ENCODE measurements at regions of chr9 and their contacts with region 1.

Region 1: GRCh38 chr9:11269036-11269435 is 656.2 kb upstream of the PTPRD start:
- DNase-seq: no peak
- ATAC-seq: no peak
- H3K4me3 ChIP-seq: no peak overlapping the region
- H3K4me3 Mint-ChIP-seq: no peak overlapping the region
- H3K27ac ChIP-seq: no peak overlapping the region
- H3K27ac Mint-ChIP-seq: no peak overlapping the region
- H3K4me1 ChIP-seq: no peaks in the 10 kb centered on the region
- H3K4me1 Mint-ChIP-seq: no peaks in the 10 kb centered on the region
- H3K27me3 ChIP-seq: no peaks in the 10 kb centered on the region
- H3K27me3 Mint-ChIP-seq: no peaks in the 10 kb centered on the region
- CTCF ChIP-seq: no peak

Region 2: DNA sequence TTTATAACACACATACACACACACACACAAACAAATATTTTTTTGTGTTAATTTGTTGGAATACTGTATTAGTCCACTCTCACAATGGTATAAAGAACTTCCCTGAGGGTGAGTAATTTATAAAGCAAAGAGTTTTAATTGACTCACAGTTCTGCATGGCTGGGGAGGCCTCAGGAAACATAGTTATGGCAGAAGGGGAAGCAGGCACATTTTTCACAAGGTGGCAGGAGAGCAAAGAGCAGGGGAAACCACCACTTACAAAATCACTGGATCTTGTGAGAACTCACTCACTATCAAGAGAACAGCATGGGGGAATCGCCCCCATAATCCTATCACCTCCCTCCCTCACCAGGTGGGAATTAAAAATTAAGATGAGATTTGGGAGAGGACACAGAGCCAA is 450.8 kb before region 1 on chr9:
- intact Hi-C with region 1: no loop called
- DNase-seq: no peak
- ATAC-seq: no peak
- H3K4me3 ChIP-seq: no peak overlapping the region
- H3K4me3 Mint-ChIP-seq: no peak overlapping the region
- H3K27ac ChIP-seq: no peak overlapping the region
- H3K27ac Mint-ChIP-seq: no peak overlapping the region
- H3K4me1 ChIP-seq: no peaks in the 10 kb centered on the region
- H3K4me1 Mint-ChIP-seq: no peaks in the 10 kb centered on the region
- H3K27me3 ChIP-seq: no peaks in the 10 kb centered on the region
- H3K27me3 Mint-ChIP-seq: no peaks in the 10 kb centered on the region
- CTCF ChIP-seq: no peak

Region 3: DNA sequence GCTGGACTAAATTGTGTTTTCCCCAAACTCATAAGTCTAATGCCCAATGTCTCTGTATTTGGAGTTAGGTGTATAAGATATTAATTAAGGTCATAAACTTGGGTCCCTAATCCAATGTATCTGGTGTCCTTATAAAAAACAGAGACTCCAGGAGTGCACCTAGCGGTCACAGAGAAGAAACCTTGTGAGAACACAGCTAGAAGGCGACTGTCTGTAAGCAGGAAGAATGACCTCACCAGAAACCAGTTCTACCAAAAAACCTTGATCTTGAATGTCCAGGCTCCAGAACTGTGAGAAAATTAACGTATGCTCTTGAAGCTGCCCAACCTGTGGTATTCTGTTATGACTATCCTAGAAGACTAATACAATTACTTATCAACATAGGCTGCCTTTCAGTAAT is 64.5 kb before region 1 on chr9:
- intact Hi-C with region 1: loop called (anchors 10 kb)
- DNase-seq: no peak
- ATAC-seq: no peak
- H3K4me3 ChIP-seq: no peak overlapping the region
- H3K4me3 Mint-ChIP-seq: no peak overlapping the region
- H3K27ac ChIP-seq: no peak overlapping the region
- H3K27ac Mint-ChIP-seq: no peak overlapping the region
- H3K4me1 ChIP-seq: no peaks in the 10 kb centered on the region
- H3K4me1 Mint-ChIP-seq: no peaks in the 10 kb centered on the region
- H3K27me3 ChIP-seq: no peaks in the 10 kb centered on the region
- H3K27me3 Mint-ChIP-seq: no peaks in the 10 kb centered on the region
- CTCF ChIP-seq: no peak

Region 4: DNA sequence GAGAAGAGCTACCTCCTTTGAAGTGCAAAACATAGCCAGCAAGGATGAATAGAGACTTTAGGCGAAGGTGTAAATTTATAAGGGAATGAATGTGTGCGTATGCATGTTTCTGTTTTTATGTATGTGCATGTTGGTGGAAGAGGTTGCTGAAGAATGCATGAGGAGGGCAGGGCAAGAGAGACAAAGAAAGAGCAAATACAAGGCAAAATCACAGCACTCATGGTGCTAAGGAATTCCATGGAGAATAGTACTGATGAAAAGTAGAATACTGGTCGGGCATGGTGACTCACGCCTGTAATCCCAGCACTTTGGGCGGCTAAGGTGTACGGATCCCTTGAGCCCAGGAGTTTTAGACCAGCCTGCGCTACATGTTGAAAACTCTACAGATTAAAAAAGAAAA is 105.9 kb after region 1 on chr9:
- intact Hi-C with region 1: no loop called
- DNase-seq: no peak
- ATAC-seq: no peak
- H3K4me3 ChIP-seq: no peak overlapping the region
- H3K4me3 Mint-ChIP-seq: no peak overlapping the region
- H3K27ac ChIP-seq: no peak overlapping the region
- H3K27ac Mint-ChIP-seq: no peak overlapping the region
- H3K4me1 ChIP-seq: no peaks in the 10 kb centered on the region
- H3K4me1 Mint-ChIP-seq: no peaks in the 10 kb centered on the region
- H3K27me3 ChIP-seq: no peaks in the 10 kb centered on the region
- H3K27me3 Mint-ChIP-seq: no peaks in the 10 kb centered on the region
- CTCF ChIP-seq: no peak